Heart right ventricle (tissue), 16 donors: ENCODE measurements at regions of chr10 and their contacts with region 1.

Region 1: GRCh38 chr10:78316451-78316931 is 282.8 kb downstream of the RPS24 start:
- DNase-seq: peak in 1 of 2 donors; percentile 49
- ATAC-seq: peak in 7 of 8 donors; percentile 42 to 72 (median 67)
- H3K4me3 ChIP-seq: no peak overlapping the region
- H3K27ac ChIP-seq: peak overlapping the region in 6 of 10 donors; percentile 7 to 68 (median 26)
- H3K4me1 ChIP-seq: peaks cover 2 to 25% (median 13%) of the 10 kb centered on the region in 9 donors
- H3K27me3 ChIP-seq: no peaks in the 10 kb centered on the region
- CTCF ChIP-seq: no peak

Region 2: GRCh38 chr10:78335691-78336401 is 19.4 kb after region 1 on chr10:
- intact Hi-C with region 1: loop called in 1 of 10 experiments (anchors 1 kb)
- DNase-seq: peak; percentile 53 to 54
- ATAC-seq: peak; percentile 55 to 80 (median 66)
- H3K4me3 ChIP-seq: no peak overlapping the region
- H3K27ac ChIP-seq: peak overlapping the region in 6 of 10 donors; percentile 23 to 70 (median 53)
- H3K4me1 ChIP-seq: peaks cover 2 to 27% (median 14%) of the 10 kb centered on the region in 9 donors
- H3K27me3 ChIP-seq: no peaks in the 10 kb centered on the region
- CTCF ChIP-seq: no peak